ENCODE measurements at regions of chr1 and their contacts with region 1.

Region 1: DNA sequence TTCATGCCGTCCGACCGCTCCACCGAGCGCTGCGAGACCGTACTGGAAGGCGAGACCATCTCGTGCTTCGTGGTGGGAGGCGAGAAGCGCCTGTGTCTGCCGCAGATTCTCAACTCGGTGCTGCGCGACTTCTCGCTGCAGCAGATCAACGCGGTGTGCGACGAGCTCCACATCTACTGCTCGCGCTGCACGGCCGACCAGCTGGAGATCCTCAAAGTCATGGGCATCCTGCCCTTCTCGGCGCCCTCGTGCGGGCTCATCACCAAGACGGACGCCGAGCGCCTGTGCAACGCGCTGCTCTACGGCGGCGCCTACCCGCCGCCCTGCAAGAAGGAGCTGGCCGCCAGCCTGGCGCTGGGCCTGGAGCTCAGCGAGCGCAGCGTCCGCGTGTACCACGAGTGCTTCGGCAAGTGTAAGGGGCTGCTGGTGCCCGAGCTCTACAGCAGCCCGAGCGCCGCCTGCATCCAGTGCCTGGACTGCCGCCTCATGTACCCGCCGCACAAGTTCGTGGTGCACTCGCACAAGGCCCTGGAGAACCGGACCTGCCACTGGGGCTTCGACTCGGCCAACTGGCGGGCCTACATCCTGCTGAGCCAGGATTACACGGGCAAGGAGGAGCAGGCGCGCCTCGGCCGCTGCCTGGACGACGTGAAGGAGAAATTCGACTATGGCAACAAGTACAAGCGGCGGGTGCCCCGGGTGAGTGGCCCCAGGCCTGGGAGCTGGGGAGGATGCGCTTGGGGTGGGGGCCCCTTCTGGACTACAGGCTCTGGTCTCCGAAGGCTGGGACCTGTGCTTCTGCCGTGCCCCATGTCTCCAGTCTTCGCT is 1.1 kb downstream of the SKI start:
- DNase-seq: peak; percentile 76
- ATAC-seq: peak; percentile 13
- H3K4me3 Mint-ChIP-seq: peak overlapping the region; percentile 90
- H3K27ac Mint-ChIP-seq: peak overlapping the region; percentile 89
- H3K4me1 Mint-ChIP-seq: peaks cover 38% of the 10 kb centered on the region
- H3K27me3 Mint-ChIP-seq: peaks cover 8% of the 10 kb centered on the region

Region 2: DNA sequence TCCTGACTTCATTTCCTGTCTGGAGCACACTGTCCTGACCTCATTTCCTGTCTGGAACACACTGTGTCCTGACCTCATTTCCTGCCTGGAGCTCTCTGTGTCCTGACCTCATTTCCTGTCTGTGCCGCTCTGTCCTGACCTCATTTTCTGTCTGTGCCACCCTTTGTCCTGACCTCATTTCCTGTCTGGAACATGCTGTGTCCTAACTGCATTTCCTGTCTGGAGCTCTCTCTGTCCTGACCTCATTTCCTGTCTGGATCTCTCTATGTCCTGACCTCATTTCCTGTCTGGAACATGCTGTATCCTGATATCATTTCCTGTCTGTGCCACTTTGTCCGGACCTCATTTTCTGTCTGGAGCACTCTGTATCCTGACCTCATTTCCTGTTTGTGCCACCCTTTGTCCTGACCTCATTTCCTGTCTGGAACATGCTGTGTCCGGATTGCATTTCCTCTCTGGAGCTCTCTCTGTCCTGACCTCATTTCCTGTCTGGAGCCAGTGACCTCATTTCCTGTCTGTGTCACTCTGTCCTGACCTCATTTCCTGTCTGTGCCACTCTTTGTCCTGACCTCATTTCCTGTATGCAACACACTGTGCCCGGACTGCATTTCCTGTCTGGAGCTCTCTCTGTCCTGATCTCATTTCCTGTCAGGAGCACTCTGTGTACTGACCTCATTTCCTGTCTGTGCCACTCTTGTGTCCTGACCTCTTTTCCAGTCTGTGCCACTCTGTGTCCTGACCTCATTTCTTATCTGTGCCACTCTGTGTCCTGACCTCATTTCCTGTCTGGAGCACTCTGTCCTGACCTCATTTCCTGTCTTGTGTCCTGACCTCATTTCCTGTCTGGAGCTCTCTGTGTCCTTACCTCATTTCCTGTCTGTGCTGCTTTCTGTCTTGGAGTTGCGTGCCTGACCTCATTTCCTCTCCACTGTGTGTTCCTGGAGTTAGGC is 26.4 kb after region 1 on chr1:
- CTCF ChIA-PET with region 1: interaction called, 12 read pairs
- DNase-seq: peak; percentile 90
- ATAC-seq: peak; percentile 72
- H3K4me3 Mint-ChIP-seq: no peak overlapping the region
- H3K27ac Mint-ChIP-seq: no peak overlapping the region
- H3K4me1 Mint-ChIP-seq: peaks cover 34% of the 10 kb centered on the region
- H3K27me3 Mint-ChIP-seq: no peaks in the 10 kb centered on the region

Region 3: GRCh38 chr1:2300851-2301606 is 71.8 kb after region 1 on chr1:
- CTCF ChIA-PET with region 1: interaction called, 11 read pairs
- DNase-seq: peak; percentile 94
- ATAC-seq: peak; percentile 77
- H3K4me3 Mint-ChIP-seq: peak overlapping the region; percentile 74
- H3K27ac Mint-ChIP-seq: peak overlapping the region; percentile 97
- H3K4me1 Mint-ChIP-seq: peaks cover 41% of the 10 kb centered on the region
- H3K27me3 Mint-ChIP-seq: no peaks in the 10 kb centered on the region

Region 4: DNA sequence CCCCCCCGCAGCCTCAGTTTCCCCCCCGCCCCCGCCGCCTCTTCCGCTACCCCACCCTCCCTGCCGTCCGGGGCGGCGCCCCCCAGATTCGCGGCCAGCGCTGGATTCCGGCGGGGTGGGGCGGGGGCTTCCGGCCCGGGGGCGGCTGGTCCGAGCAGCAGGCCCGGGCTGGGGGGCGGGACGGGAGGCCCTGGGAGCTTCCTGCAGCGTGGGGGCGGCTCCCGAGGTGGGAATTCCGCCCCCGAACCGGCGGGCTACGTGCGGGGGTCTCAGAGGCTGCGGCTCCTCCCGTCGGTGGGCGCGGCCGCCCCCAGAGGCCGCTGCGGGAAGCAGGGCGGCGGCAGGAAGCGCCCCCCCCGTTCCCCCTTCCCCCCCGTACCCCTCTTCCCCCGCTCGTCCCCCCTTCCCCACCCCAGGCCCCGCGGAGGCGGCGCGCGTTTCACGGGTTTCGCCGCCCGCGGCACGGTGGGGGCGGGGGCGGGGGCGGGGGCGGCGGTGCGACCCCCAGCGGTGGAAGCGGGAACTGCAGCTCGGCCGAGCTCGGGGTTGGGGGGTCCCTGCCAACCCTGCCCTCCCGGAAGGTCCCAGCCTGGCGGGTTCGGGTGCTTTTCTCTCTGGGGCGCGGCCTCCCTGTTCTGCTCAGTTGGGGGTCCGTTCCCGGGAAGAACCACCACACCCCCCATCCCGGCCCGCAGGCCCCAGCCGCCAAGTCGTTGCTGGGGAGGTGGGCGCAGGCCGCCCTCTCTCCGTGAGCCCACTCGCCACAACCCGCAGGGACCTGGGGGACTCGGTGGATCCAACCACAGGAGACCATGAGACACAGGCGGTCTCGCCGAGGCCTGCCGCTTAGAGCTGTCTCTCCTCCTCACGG is 85.8 kb after region 1 on chr1:
- CTCF ChIA-PET with region 1: interaction called, 12 read pairs
- DNase-seq: peak; percentile 63
- ATAC-seq: peak; percentile 53
- H3K4me3 Mint-ChIP-seq: peak overlapping the region; percentile 20
- H3K27ac Mint-ChIP-seq: no peak overlapping the region
- H3K4me1 Mint-ChIP-seq: peaks cover 6% of the 10 kb centered on the region
- H3K27me3 Mint-ChIP-seq: no peaks in the 10 kb centered on the region

Region 5: GRCh38 chr1:2381741-2382620 is 152.7 kb after region 1 on chr1:
- CTCF ChIA-PET with region 1: interaction called, 17 read pairs
- DNase-seq: peak; percentile 85
- ATAC-seq: peak; percentile 98
- H3K4me3 Mint-ChIP-seq: no peak overlapping the region
- H3K27ac Mint-ChIP-seq: no peak overlapping the region
- H3K4me1 Mint-ChIP-seq: peaks cover 2% of the 10 kb centered on the region
- H3K27me3 Mint-ChIP-seq: no peaks in the 10 kb centered on the region